Activated T-helper 2 cell treated with anti-CD3 and anti-CD28 coated beads, Interferon-gamma antibody, Interleukin-2, Interleukin-4, amounts not matched to agents 10 μg/mL and 5 μg/mL and 100 μg/mL, durations not matched to agents 14 hours and 24 hours and 36 hours (primary cell): ENCODE measurements at regions of chr4 and their contacts with region 1.

Region 1: GRCh38 chr4:142846729-142847596 is 862 bp upstream of the INPP4B start:
- DNase-seq: peak; percentile 62
- H3K4me3 Mint-ChIP-seq: peak overlapping the region; percentile 86
- H3K27ac Mint-ChIP-seq: peak overlapping the region; percentile 76
- H3K4me1 Mint-ChIP-seq: peaks cover 26% of the 10 kb centered on the region
- H3K27me3 Mint-ChIP-seq: peaks cover 36% of the 10 kb centered on the region

Region 2: DNA sequence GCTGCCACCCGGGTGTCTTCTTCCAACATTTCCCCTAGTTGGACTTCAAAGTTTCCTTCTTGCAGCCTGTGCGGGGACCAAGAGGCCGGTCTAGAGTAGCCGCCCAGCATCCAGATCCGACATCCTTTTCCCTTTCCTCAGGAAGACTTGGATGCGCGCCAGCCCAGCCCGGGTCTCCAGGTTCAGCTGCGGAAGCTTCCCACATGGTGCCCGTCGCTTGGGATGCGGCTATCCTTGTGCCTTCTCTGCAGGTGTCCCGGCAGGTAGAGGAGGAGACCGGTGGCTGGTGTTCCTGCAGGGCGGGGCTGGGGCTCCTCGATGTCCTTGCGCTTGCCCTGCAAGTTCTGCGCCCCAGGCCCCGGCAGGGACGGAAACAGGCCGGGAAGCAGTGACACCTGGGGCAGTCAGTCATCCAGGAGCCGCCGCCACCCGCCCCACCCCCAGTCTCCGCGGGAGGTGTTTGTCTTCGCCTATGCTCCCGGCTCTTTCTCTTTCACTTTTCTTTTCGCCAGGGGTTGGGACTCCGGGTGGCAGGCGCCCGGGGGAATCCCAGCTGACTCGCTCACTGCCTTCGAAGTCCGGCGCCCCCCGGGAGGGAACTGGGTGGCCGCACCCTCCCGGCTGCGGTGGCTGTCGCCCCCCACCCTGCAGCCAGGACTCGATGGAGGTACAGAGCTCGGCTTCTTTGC is 1210.7 kb before region 1 on chr4 and contains the start of gene IL15:
- intact Hi-C with region 1: loop called (anchors 5 kb)
- DNase-seq: peak; percentile 57
- H3K4me3 Mint-ChIP-seq: peak within 1 kb of the TSS; percentile 89
- H3K27ac Mint-ChIP-seq: peak within 1 kb of the TSS; percentile 14
- H3K4me1 Mint-ChIP-seq: peaks cover 7% of the 10 kb centered on the region
- H3K27me3 Mint-ChIP-seq: peaks cover 38% of the 10 kb centered on the region
- total RNA-seq, gene IL15: 0.16 and 0.59 TPM in 2 replicates

Region 3: DNA sequence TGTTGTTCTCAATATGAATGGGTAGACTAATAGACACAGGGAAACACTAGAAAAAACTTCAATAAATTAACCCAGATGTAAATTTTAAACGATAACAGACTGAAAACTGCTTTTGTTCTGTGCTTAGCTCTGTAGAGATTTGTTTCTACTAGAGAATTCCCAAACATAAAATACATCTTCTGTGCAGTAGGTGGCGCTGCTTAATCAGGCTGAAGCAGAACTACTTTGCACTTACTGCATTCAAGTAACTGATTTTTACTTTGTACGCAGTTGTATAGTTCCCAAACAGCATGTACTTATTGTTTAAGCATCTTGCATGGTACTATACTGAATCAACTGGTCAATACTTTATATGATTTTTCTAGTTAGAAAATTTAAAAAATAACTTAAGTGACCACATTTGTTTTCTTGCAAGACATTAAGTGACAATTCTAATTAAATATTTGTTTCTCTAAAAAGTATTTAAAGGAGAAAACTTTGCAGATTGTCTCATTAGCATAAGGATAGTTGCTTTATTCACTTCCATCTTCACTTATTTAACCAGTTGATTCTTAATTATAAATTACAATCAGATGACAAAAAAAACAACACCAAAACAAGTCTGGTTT is 720.0 kb before region 1 on chr4:
- intact Hi-C with region 1: loop called (anchors 1 kb)
- DNase-seq: peak; percentile 24
- H3K4me3 Mint-ChIP-seq: no peak overlapping the region
- H3K27ac Mint-ChIP-seq: no peak overlapping the region
- H3K4me1 Mint-ChIP-seq: peaks cover 20% of the 10 kb centered on the region
- H3K27me3 Mint-ChIP-seq: no peaks in the 10 kb centered on the region

Region 4: GRCh38 chr4:142353149-142353738 is 493.7 kb before region 1 on chr4:
- intact Hi-C with region 1: loop called (anchors 1 kb)
- DNase-seq: no peak
- H3K4me3 Mint-ChIP-seq: peak overlapping the region; percentile 15
- H3K27ac Mint-ChIP-seq: peak overlapping the region; percentile 88
- H3K4me1 Mint-ChIP-seq: peaks cover 89% of the 10 kb centered on the region
- H3K27me3 Mint-ChIP-seq: no peaks in the 10 kb centered on the region

Region 5: DNA sequence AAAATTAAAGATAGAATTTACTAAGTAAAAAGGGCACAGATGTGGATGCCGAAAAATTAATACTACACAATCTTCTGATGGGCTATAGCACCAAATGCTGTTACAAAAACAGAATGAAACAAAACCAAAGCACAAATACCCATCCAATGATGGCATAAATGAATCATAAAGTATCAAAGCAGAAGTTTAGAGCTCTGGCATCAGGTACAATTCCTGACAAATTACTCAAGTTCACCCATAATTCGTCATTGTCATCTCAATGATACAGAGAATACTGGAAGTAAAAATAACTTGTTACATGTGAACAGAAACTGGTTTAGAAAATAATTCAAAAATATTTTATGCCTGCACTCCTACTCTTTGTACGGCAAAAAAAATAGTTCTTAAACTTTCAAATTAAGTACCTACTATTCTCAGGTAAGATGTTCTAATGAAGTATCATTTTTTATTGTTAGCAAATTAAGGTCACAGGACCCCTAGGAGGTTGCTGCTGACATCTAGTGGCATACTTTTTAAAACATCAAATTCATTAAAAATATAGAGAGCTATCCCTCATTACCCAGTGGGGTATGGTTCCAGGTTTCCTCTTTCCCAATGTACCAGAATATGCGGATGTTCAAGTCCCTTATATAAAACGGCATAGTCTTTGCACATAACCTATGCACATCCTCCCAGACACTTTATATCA is 127.0 kb before region 1 on chr4:
- intact Hi-C with region 1: loop called (anchors 5 kb)
- DNase-seq: no peak
- H3K4me3 Mint-ChIP-seq: no peak overlapping the region
- H3K27ac Mint-ChIP-seq: no peak overlapping the region
- H3K4me1 Mint-ChIP-seq: peaks cover 18% of the 10 kb centered on the region
- H3K27me3 Mint-ChIP-seq: no peaks in the 10 kb centered on the region

Region 6: DNA sequence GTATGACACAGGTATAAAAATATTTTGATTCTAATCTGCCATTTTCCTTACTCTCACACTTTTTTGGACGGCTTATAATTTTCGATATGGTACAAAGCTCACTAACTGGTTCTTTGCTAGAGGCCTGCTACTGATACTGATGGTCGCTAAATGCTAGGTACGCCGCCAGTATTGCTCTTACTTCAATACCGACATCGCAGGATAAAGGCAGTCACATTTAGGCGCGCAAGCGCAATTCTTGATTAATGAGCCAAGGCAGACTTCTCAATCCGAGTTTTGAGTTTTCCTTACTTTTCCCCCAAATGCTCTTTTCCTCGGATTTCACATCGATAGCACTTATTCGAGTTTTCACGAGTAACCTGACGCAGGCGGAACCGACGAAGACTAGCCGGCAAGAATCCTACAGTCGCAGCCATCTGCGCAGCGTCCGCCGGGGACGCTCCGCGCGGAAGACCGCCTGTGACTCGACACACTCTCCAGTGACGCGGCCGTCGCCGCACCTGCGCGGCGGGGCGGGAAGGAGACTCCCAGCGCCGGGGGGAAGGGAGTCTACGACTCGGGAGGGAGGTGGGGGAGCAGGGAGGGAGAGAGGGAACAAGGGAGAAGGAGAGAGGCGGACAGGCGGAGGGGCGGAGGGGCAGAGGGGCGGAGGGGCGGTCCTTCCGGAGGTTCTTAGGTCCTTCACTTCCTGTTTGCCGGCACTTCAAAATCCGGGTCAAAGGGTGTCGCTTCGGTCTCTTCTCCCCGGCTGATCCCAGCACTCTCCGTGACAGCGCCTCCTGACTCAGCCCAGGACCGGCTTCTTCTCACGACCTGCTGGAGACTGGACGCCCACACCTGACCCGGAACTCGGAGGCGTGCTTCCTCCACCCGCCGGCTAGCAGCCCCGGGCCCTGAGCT is 337.5 kb after region 1 on chr4 and contains the start of gene USP38:
- intact Hi-C with region 1: loop called (anchors 1 kb)
- DNase-seq: peak; percentile 81
- H3K4me3 Mint-ChIP-seq: peak within 1 kb of the TSS; percentile 89
- H3K27ac Mint-ChIP-seq: peak within 1 kb of the TSS; percentile 96
- H3K4me1 Mint-ChIP-seq: peaks cover 31% of the 10 kb centered on the region
- H3K27me3 Mint-ChIP-seq: no peaks in the 10 kb centered on the region
- total RNA-seq, gene USP38: 23.5 and 26.2 TPM in 2 replicates